OCI-LY7 (cell line): ENCODE measurements at regions of chr6 and their contacts with region 1.

Region 1: GRCh38 chr6:150865406-150866146 is at the start of gene MTHFD1L:
- DNase-seq: peak; percentile 91
- H3K4me3 ChIP-seq: peak within 1 kb of the TSS; percentile 96
- H3K27ac ChIP-seq: peak within 1 kb of the TSS; percentile 61
- H3K4me1 ChIP-seq: peaks cover 14% of the 10 kb centered on the region
- CTCF ChIP-seq: peak; percentile 75
- total RNA-seq, gene MTHFD1L: 59.6 and 68.4 TPM in 2 replicates

Region 2: DNA sequence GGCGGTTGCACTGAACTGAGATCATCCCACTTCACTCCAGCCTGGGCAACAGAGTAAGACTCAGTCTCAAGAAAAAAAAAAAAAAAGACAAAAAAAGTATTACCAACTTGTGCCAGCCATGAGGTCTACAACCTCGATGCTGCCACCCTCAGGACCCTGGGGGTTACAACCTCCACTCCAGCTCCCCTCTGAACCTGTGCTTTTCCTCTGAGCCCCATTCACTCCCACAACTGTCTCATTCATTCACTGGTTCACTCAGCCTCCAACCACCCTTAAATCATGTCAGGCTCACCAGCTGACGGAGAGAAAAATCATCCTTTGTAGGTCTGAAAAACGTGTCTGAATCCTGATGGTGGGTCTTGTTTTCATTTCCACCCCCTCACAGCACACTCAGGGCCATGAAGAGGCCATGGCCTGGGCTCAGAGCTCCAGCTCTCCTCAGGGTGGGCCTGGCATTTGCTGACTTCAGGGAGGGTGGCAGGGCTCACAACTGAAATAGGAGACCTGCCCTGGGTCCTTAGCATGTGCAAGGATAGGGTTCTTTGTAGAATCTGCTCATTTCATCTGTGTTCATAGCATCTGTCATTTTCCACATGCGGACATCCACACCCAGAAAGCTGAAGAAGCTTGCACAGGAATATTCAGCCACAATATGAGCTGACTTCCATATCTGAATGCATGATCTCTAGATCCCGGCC is 903.7 kb before region 1 on chr6:
- CTCF ChIA-PET with region 1: no interaction called
- POLR2A ChIA-PET with region 1: interaction called, 12 read pairs
- intact Hi-C with region 1: no loop called
- DNase-seq: peak; percentile 59
- H3K4me3 ChIP-seq: no peak overlapping the region
- H3K27ac ChIP-seq: no peak overlapping the region
- H3K4me1 ChIP-seq: peaks cover 9% of the 10 kb centered on the region
- CTCF ChIP-seq: peak; percentile 72

Region 3: DNA sequence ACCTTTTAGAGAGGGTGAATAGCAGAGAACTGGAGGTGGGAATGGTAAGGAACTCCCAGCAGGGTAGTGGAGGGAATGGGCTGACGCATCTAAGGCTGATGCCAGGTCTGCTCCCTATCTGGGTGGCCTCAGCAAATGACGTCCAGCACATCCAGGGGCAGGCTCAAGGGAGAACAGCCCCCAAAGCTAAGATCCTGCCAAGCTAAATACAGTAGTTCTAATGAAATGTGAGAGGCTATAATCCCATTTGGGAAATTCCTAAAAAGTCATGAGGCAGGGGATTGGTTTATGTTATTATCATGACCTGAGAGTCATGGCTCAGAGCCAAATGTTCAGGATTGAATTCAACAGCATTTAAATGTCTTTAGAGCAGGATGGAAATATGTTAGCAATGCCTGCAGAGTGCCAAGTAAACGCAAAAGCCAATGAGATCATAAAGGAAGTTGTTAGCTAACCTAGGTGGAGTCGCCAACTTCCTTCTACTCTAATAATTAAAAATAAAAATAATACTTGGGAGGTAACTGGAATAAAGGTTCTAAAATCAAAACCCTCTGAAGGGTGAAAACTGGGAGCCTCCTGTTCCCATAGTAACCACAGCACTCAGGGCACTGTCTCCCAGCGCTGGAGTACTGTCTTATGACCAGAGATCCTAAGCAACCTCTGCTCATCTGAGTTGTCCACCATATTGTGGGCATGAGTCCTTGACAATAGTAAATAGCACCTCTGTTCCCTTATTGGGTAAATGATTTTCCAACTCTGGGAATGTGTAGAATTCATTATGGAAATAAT is 461.9 kb before region 1 on chr6:
- CTCF ChIA-PET with region 1: no interaction called
- POLR2A ChIA-PET with region 1: no interaction called
- intact Hi-C with region 1: no loop called
- DNase-seq: no peak
- H3K4me3 ChIP-seq: no peak overlapping the region
- H3K27ac ChIP-seq: no peak overlapping the region
- H3K4me1 ChIP-seq: peaks cover 8% of the 10 kb centered on the region
- CTCF ChIP-seq: no peak

Region 4: GRCh38 chr6:150622941-150623874 is 242.4 kb before region 1 on chr6:
- CTCF ChIA-PET with region 1: no interaction called
- POLR2A ChIA-PET with region 1: no interaction called
- intact Hi-C with region 1: no loop called
- DNase-seq: peak; percentile 99
- H3K4me3 ChIP-seq: peak overlapping the region; percentile 57
- H3K27ac ChIP-seq: peak overlapping the region; percentile 99
- H3K4me1 ChIP-seq: peaks cover 94% of the 10 kb centered on the region
- CTCF ChIP-seq: no peak

Region 5: DNA sequence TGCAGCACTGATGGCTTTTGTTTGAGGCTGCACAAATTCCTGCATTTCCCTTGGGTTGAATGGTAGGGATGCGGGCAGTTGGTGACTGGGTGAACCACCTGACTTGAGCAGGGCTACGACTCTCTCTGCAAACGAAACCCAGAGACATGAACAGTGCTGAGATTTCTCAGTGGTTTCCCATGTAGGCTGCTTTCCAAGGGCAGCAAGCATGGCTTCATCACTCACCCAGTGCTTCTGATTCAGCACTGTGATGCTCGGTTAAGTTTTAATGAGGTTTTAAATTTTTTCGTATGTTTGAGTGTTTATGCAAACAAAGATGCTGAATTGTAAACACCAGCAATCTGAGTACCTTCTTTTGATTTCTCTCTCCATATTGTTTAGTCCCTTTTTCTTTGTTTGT is 127.1 kb after region 1 on chr6:
- CTCF ChIA-PET with region 1: no interaction called
- POLR2A ChIA-PET with region 1: no interaction called
- intact Hi-C with region 1: no loop called
- DNase-seq: no peak
- H3K4me3 ChIP-seq: no peak overlapping the region
- H3K27ac ChIP-seq: no peak overlapping the region
- H3K4me1 ChIP-seq: no peaks in the 10 kb centered on the region
- CTCF ChIP-seq: no peak